ENCODE measurements at regions of chr1 and their contacts with region 1.

Region 1: GRCh38 chr1:31705080-31705866 is 1.5 kb upstream of the COL16A1 start:
- DNase-seq: no peak
- ATAC-seq: peak; percentile 81
- H3K4me3 ChIP-seq: peak overlapping the region; percentile 2; the same call in 1 of the 2 replicates
- H3K27ac ChIP-seq: peak overlapping the region; percentile 62
- H3K4me1 ChIP-seq: peaks cover 45% of the 10 kb centered on the region
- H3K27me3 ChIP-seq: no peaks in the 10 kb centered on the region
- CTCF ChIP-seq: peak; percentile 32 to 78 (median 59); a peak in 5 of 6 replicates
- EP300 ChIP-seq: no peak
- POLR2A ChIP-seq: no peak
- RAD21 ChIP-seq: peak; percentile 79

Region 2: DNA sequence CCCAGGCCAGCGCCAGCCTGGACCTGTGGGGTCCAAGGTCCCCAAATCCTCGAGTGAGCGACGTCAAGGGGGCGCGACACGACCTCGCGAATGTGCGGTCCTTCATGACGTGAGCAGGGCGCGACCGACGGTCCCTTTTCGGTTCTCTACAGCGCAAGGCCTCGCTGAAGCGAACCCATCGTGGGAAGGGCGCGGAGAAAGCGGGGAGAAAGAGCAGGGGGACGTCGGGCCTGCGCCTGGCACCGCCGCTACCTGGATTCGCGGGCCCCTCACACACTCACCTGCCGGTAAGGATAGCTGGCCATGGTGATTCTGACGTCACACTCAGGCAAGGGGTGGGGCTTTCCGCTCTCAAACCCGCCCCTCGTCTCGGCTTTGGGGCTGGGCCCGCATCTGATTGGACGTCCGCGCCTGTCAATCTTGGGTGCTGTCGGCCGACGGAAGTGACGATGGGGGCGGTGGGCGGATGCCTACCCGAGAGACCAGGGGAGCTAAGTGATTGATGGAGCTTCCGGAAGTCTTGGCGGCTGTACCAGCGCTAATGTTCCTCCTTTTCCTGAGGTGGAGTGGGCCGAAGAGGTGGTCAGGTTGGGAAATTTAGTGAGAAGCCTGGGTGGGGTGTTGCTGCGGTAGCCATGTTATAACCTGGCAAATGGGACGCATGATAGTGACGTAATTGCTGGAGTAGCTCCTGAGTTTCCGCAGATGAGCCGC is 60.6 kb before region 1 on chr1 and contains the start of gene PEF1:
- CTCF ChIA-PET with region 1: interaction called, 8 read pairs
- POLR2A ChIA-PET with region 1: no interaction called
- RAD21 ChIA-PET with region 1: interaction called, 11 read pairs
- SMC1A ChIA-PET with region 1: interaction called, 5 read pairs
- in situ Hi-C with region 1: no loop called
- intact Hi-C with region 1: no loop called
- DNase-seq: peak; percentile 90
- ATAC-seq: peak; percentile 85
- H3K4me3 ChIP-seq: peak within 1 kb of the TSS; percentile 78
- H3K27ac ChIP-seq: peak within 1 kb of the TSS; percentile 92
- H3K4me1 ChIP-seq: peaks cover 5% of the 10 kb centered on the region
- H3K27me3 ChIP-seq: no peaks in the 10 kb centered on the region
- CTCF ChIP-seq: no peak
- EP300 ChIP-seq: no peak
- POLR2A ChIP-seq: peak; percentile 90
- RAD21 ChIP-seq: no peak
- polyA plus RNA-seq, gene PEF1: 27.1 to 40.4 TPM

Region 3: GRCh38 chr1:31669786-31670592 is 35.3 kb before region 1 on chr1:
- CTCF ChIA-PET with region 1: interaction called, 83 read pairs
- POLR2A ChIA-PET with region 1: interaction called, 4 read pairs
- RAD21 ChIA-PET with region 1: interaction called, 53 read pairs
- SMC1A ChIA-PET with region 1: interaction called, 51 read pairs
- in situ Hi-C with region 1: loop called (anchors 5 kb)
- intact Hi-C with region 1: no loop called
- DNase-seq: no peak
- ATAC-seq: no peak
- H3K4me3 ChIP-seq: no peak overlapping the region
- H3K27ac ChIP-seq: no peak overlapping the region
- H3K4me1 ChIP-seq: no peaks in the 10 kb centered on the region
- H3K27me3 ChIP-seq: 0 out of 4 replicates have a peak, but pooled peaks cover 0 to 1% of the 10 kb centered on the region in 2 experiments
- CTCF ChIP-seq: no peak
- EP300 ChIP-seq: no peak
- POLR2A ChIP-seq: no peak
- RAD21 ChIP-seq: no peak

Region 4: DNA sequence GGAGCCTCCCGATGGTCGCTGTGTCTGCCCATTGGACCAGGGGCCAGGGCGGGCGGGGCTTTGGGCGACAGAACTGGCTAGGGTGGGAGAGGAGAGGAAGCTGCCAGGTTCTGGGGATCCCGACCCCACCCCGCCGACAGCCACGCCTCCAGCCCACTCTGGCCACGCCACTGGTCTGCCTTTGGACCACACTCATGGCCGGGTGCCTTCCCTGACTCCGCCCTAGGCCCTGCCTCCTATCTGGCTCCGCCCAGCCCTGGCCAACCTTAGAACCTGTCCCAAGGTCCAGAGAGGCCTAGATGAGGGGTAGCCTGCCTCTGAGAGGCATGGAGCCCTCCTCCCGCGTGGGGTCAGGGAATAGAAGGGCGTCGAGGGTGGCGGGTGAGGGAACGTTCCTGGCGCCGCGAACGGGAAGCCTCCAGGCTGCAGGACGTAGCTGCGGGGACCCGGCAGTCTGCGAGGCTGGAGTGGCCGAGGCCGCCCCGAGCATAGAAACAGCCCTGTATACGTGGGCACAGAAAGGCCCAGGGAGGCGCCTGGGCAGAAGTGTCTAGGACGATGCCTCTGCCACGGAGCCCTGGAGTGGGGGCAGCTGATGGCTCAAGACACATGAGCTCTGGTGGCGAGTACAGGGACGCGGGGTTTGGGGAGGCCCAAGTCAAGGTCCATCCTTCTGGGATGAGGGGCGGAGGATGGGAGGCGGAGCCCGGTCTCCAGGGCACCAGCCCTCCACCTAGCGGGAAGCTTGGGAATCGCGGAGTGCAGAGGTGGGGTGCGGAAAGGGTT is 10.0 kb after region 1 on chr1:
- CTCF ChIA-PET with region 1: interaction called, 8 read pairs
- POLR2A ChIA-PET with region 1: interaction called, 4 read pairs
- RAD21 ChIA-PET with region 1: interaction called, 7 read pairs
- SMC1A ChIA-PET with region 1: interaction called, 12 read pairs
- in situ Hi-C with region 1: no loop called
- intact Hi-C with region 1: no loop called
- DNase-seq: no peak
- ATAC-seq: peak; percentile 98
- H3K4me3 ChIP-seq: peak overlapping the region; percentile 38; the same call in 1 of the 2 replicates
- H3K27ac ChIP-seq: no peak overlapping the region
- H3K4me1 ChIP-seq: peaks cover 4% of the 10 kb centered on the region; the same call in 1 of the 2 replicates
- H3K27me3 ChIP-seq: peaks cover 0 to 6% of the 10 kb centered on the region in 2 experiments; a peak in 1 of 4 replicates
- CTCF ChIP-seq: peak; percentile 54 to 82 (median 64)
- EP300 ChIP-seq: no peak
- POLR2A ChIP-seq: no peak
- RAD21 ChIP-seq: no peak

Measured in GM12878 (cell line).